Ascending aorta (tissue), 2 donors: ENCODE measurements at regions of chr3 and their contacts with region 1.

Region 1: GRCh38 chr3:182713743-182714517 is 79.4 kb upstream of the ATP11B start:
- DNase-seq: no peak
- H3K4me3 ChIP-seq: no peak overlapping the region
- H3K27ac ChIP-seq: no peak overlapping the region
- H3K4me1 ChIP-seq: no peaks in the 10 kb centered on the region
- H3K27me3 ChIP-seq: no peaks in the 10 kb centered on the region
- CTCF ChIP-seq: peak; percentile 33 to 60 (median 44)

Region 2: GRCh38 chr3:182837855-182838454 is 124.0 kb after region 1 on chr3:
- intact Hi-C with region 1: loop called (anchors 2 kb)
- DNase-seq: no peak
- H3K4me3 ChIP-seq: no peak overlapping the region
- H3K27ac ChIP-seq: no peak overlapping the region
- H3K4me1 ChIP-seq: no peaks in the 10 kb centered on the region
- H3K27me3 ChIP-seq: no peaks in the 10 kb centered on the region
- CTCF ChIP-seq: peak in 1 of 3 experiments; percentile 52

Region 3: GRCh38 chr3:183018421-183019192 is 304.7 kb after region 1 on chr3:
- intact Hi-C with region 1: no loop called
- DNase-seq: no peak
- H3K4me3 ChIP-seq: no peak overlapping the region
- H3K27ac ChIP-seq: no peak overlapping the region
- H3K4me1 ChIP-seq: no peaks in the 10 kb centered on the region
- H3K27me3 ChIP-seq: no peaks in the 10 kb centered on the region
- CTCF ChIP-seq: no peak